ENCODE measurements at regions of chr12 and their contacts with region 1.

Region 1: DNA sequence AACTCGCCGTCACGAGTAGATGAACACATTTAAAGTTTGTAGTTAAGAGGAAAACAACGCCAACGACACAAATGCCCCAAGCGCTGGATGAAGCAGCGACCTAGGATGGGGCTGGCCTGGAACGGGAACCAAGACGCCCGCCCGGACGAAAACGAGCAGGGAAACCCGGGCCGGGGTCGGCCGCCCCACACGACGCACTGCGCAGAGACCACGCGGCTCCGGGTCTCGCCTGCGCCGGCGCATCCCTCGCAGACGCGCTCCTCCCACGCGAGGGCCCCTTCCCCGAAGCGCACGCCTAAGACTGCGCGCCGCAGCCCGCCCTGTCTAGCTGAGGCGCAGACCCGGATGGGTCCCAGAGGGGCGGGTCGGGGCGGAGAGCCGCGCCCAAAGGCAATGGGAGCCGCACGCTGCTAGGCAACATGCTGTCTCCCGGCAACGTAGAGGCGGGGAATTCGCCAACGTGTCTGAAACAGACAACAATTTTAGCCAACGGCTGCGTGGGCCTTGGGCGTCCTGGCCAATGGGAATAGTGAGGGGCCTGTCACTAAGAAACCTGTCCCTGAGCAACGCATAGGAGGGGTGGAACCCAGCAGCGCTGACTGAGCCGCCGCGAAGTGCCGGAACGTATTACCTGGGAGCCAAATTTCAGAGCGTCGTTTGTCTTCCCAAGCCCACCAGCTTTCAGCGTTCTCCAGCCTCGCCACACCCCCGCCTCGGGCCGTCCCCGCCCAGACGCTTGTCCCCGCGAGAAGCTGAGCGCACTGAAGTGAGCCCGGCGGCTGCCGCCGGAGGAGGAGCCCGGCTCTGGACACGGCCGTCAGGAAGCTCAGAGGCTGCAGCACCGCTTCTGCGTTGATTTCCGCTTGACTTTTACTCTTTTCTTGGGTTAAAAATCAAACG is 21.0 kb upstream of the CHFR start:
- DNase-seq: peak; percentile 98
- H3K4me3 ChIP-seq: peak overlapping the region; percentile 52
- H3K27ac ChIP-seq: peak overlapping the region; percentile 67 to 79
- H3K4me1 ChIP-seq: peaks cover 4% of the 10 kb centered on the region
- H3K27me3 ChIP-seq: no peaks in the 10 kb centered on the region
- CTCF ChIP-seq: peak in 1 of 4 experiments; percentile 20
- POLR2A ChIP-seq: peak; percentile 21

Region 2: GRCh38 chr12:132761032-132761920 is 147.1 kb before region 1 on chr12 and contains the start of gene ANKLE2:
- intact Hi-C with region 1: loop called (anchors 10 kb)
- DNase-seq: no peak
- H3K4me3 ChIP-seq: peak within 1 kb of the TSS; percentile 90 to 94
- H3K27ac ChIP-seq: peak within 1 kb of the TSS; percentile 89 to 94
- H3K4me1 ChIP-seq: peaks cover 4% of the 10 kb centered on the region
- H3K27me3 ChIP-seq: no peaks in the 10 kb centered on the region
- CTCF ChIP-seq: no peak
- POLR2A ChIP-seq: peak; percentile 22
- total RNA-seq, gene ANKLE2: 31.1 to 82.4 TPM

Measured in prostate gland (tissue), 2 donors.